ENCODE measurements at regions of chr2 and their contacts with region 1.

Region 1: GRCh38 chr2:241859436-241860183 is 916 bp upstream of the PDCD1 start:
- DNase-seq: peak; percentile 65
- ATAC-seq: peak; percentile 46
- H3K4me3 Mint-ChIP-seq: peak overlapping the region; percentile 52
- H3K27ac Mint-ChIP-seq: peak overlapping the region; percentile 71
- H3K4me1 Mint-ChIP-seq: peaks cover 36% of the 10 kb centered on the region
- H3K27me3 Mint-ChIP-seq: peaks cover 14% of the 10 kb centered on the region

Region 2: DNA sequence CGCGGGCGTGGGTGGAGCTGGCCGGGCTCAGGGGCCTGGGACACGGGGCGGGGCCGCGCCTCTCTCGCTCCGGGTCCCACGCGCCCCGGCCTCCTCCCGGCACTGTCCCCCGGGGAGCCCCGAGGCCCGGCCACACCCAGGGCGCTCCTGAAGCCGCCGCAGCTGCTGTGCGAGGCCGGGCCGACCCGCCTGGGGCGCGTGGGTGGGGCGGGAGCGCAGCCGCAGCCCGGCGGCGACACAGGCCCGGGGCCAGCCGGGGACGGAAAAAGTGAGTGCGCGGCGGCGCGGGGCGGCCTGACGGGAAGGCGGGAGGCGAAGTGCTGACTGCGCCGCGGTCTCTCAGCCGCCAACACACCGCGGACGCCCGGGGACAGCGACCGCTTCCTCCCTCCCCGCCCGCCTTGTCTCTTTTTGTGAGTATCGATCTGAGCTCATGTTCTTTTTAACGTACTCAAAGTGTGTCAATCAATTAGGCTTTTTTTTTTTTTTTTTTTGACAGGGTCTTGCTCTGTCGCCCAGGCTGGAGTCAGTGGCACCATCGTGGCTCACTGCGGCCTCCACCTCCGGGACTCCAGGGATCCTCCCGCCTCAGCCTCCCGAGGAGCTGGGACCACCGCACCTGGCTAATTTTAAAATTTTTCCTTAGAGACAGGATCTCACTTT is 15.4 kb before region 1 on chr2:
- CTCF ChIA-PET with region 1: interaction called, 12 read pairs
- DNase-seq: peak; percentile 83
- ATAC-seq: peak; percentile 85
- H3K4me3 Mint-ChIP-seq: peak overlapping the region; percentile 43
- H3K27ac Mint-ChIP-seq: peak overlapping the region; percentile 66
- H3K4me1 Mint-ChIP-seq: peaks cover 32% of the 10 kb centered on the region
- H3K27me3 Mint-ChIP-seq: peaks cover 57% of the 10 kb centered on the region

Measured in activated CD8-positive, alpha-beta memory T cell treated with anti-CD3 and anti-CD28 coated beads, Interleukin-2, amount 10 ng/mL, durations not matched to agents 7 days and 5 days (primary cell).